ENCODE measurements at regions of chr13 and their contacts with region 1.

Region 1: DNA sequence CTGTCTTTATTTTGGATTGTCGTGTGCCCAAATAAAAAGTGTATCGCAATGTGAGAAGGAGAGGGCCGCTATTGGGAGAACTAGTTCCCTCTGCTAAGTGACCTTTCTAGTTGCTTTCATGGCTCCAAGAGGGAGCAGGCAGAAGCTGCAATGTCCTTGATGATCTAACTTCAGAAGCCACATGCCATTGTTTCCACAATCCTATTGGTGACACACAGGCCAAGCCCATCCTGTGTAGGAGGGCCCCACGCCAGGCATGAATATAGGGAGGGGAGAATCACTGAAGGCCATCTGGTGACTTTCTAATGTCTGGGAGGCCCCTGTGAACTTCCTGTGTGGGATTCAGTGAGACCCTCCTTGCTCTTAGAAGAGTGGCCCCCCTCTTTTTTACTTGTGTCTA is 47.8 kb upstream of the KPNA3 start:
- DNase-seq: no peak
- ATAC-seq: no peak
- H3K4me3 ChIP-seq: no peak overlapping the region
- H3K4me1 ChIP-seq: no peaks in the 10 kb centered on the region
- CTCF ChIP-seq: no peak

Region 2: GRCh38 chr13:49329821-49330220 is 510.4 kb before region 1 on chr13:
- intact Hi-C with region 1: no loop called
- DNase-seq: no peak
- ATAC-seq: no peak
- H3K4me3 ChIP-seq: no peak overlapping the region
- H3K4me1 ChIP-seq: no peaks in the 10 kb centered on the region
- CTCF ChIP-seq: no peak

Region 3: GRCh38 chr13:49655906-49656305 is 184.4 kb before region 1 on chr13:
- intact Hi-C with region 1: loop called (anchors 5 to 10 kb)
- DNase-seq: no peak
- ATAC-seq: no peak
- H3K4me3 ChIP-seq: no peak overlapping the region
- H3K4me1 ChIP-seq: no peaks in the 10 kb centered on the region
- CTCF ChIP-seq: no peak

Region 4: DNA sequence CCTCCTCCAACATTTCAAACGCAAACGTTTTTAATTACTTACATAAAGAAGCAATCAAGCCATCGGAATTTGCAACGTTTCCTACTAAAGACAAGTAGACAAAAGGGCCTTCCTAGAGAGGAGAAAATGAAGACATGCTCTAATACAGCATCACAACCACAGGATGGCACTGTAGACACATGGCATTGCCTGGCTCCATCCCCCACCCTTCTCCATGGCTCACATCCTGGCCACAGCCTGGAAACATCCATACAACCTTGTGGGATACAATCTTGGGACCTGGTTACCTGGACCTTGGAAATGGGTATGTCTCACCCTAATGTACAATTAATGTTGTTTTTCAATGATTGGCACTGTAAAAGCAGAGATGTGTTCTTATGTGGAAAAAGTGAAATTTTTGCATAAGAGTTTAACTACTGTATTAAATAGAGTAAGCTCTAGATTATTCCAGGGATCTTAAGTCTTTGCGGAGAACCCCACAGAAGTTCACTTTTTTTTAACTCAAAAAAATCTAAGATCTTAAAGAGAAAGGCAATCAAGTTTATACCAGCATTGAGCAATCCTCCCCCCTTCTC is 170.4 kb before region 1 on chr13:
- intact Hi-C with region 1: loop called (anchors 5 to 10 kb)
- DNase-seq: peak in 2 of 3 donors; percentile 69 to 75
- ATAC-seq: peak; percentile 97
- H3K4me3 ChIP-seq: no peak overlapping the region
- H3K4me1 ChIP-seq: no peaks in the 10 kb centered on the region
- CTCF ChIP-seq: peak; percentile 67

Region 5: GRCh38 chr13:50187352-50188029 is 347.2 kb after region 1 on chr13:
- intact Hi-C with region 1: no loop called
- DNase-seq: no peak
- ATAC-seq: no peak
- H3K4me3 ChIP-seq: no peak overlapping the region
- H3K4me1 ChIP-seq: no peaks in the 10 kb centered on the region
- CTCF ChIP-seq: no peak